ENCODE measurements at regions of chr4 and their contacts with region 1.

Region 1: GRCh38 chr4:185896823-185897488 is 85.0 kb upstream of the SORBS2 start:
- DNase-seq: no peak
- ATAC-seq: no peak
- H3K4me3 ChIP-seq: no peak overlapping the region
- H3K27ac ChIP-seq: no peak overlapping the region
- H3K4me1 ChIP-seq: no peaks in the 10 kb centered on the region
- H3K27me3 ChIP-seq: no peaks in the 10 kb centered on the region
- CTCF ChIP-seq: no peak

Region 2: GRCh38 chr4:185656467-185656931 is 240.5 kb before region 1 on chr4:
- CTCF ChIA-PET with region 1: no interaction called
- POLR2A ChIA-PET with region 1: interaction called, 10 read pairs
- in situ Hi-C with region 1: no loop called
- intact Hi-C with region 1: no loop called
- DNase-seq: no peak
- ATAC-seq: no peak
- H3K4me3 ChIP-seq: no peak overlapping the region
- H3K27ac ChIP-seq: no peak overlapping the region
- H3K4me1 ChIP-seq: no peaks in the 10 kb centered on the region; the same call in 1 of the 2 replicates
- H3K27me3 ChIP-seq: no peaks in the 10 kb centered on the region
- CTCF ChIP-seq: no peak

Measured in Panc1 (cell line).